Activated B cell treated with CpG ODN at 0.5 μM for 24 hours (primary cell): ENCODE measurements at regions of chr18 and their contacts with region 1.

Region 1: DNA sequence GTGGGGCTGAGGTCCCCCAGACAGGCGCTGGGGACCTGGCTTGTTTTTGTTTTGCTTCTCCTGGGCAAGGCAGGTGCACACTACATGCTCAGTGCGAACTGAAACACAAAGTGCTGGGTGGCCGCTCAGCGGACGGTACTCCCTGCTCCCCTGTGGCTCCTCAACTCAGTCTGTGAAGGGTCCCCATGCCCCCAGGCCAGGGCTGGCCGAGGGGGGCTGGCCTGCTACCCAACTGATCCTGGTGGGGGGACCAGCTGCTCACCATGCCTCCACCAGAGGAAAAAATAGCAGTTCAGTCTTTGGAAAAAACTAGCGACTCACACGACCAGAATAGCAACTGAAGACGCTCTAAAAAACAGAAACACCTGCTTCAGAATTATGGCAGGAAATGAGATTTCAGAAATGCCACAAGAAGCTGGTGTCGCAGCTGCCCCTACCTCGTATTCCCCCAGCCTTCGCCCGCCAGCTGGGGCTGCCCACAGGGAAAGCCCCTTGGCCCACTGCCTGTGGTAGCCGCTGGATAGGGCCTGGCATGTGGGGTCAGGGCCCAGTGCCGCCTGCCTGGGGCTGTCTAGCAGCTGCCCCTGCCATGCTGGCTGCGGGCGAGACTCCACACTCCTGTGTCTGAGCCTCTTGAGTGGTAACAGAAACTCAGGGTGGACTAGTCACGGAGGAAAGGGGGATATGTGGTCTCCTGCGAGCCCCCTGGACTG is 43.7 kb downstream of the MEX3C start:
- DNase-seq: peak; percentile 66
- ATAC-seq: peak; percentile 76
- H3K4me3 Mint-ChIP-seq: peak overlapping the region; percentile 86
- H3K27ac Mint-ChIP-seq: peak overlapping the region; percentile 99
- H3K4me1 Mint-ChIP-seq: peaks cover 54% of the 10 kb centered on the region
- H3K27me3 Mint-ChIP-seq: no peaks in the 10 kb centered on the region
- CTCF ChIP-seq: no peak

Region 2: DNA sequence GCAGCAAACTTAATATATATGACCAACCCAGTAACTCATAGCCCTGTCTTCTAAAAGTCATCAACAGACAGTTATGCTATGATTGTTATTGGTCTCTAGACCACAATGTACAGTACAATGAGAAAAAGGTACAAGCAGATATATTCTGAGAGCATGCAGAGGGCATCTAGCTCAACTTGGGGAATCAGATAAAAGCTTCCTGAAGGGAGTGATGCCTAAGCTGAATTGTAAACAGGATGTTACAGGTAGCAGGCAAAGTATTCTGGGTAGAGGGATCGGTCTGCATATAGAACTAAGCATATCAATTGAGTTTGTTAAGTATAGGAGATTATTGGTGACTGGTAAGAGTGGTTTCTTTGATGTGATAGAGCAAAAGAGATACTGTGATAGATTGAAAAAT is 244.6 kb before region 1 on chr18:
- CTCF ChIA-PET with region 1: no interaction called
- POLR2A ChIA-PET with region 1: no interaction called
- intact Hi-C with region 1: no loop called
- DNase-seq: no peak
- ATAC-seq: no peak
- H3K4me3 Mint-ChIP-seq: no peak overlapping the region
- H3K27ac Mint-ChIP-seq: no peak overlapping the region
- H3K4me1 Mint-ChIP-seq: no peaks in the 10 kb centered on the region
- H3K27me3 Mint-ChIP-seq: no peaks in the 10 kb centered on the region
- CTCF ChIP-seq: no peak

Region 3: GRCh38 chr18:51077217-51077616 is 76.6 kb before region 1 on chr18:
- CTCF ChIA-PET with region 1: no interaction called
- POLR2A ChIA-PET with region 1: interaction called, 5 read pairs
- intact Hi-C with region 1: loop called (anchors 2 kb)
- DNase-seq: no peak
- ATAC-seq: peak; percentile 33
- H3K4me3 Mint-ChIP-seq: no peak overlapping the region
- H3K27ac Mint-ChIP-seq: no peak overlapping the region
- H3K4me1 Mint-ChIP-seq: peaks cover 34% of the 10 kb centered on the region
- H3K27me3 Mint-ChIP-seq: no peaks in the 10 kb centered on the region
- CTCF ChIP-seq: no peak

Region 4: DNA sequence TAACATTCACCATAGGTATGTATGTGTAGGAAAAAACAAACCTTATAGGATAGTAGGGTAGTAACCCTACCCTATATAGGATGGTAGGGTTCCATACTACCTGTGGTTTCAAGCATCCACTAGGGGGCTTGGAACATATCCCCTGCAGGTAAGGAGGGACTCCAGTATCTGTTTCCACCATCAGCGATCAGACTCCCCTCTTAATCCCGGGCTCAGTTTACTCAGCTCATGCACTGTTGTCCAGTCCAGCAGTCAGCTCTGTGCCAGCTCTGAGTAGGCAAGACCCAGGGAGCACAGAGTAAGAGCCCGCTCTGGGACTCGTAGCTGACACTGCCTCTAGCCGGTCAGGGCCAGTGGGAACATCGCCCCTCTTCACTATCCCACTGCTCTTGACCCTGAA is 18.0 kb before region 1 on chr18:
- CTCF ChIA-PET with region 1: interaction called, 5 read pairs
- POLR2A ChIA-PET with region 1: no interaction called
- intact Hi-C with region 1: loop called (anchors 1 kb)
- DNase-seq: no peak
- ATAC-seq: no peak
- H3K4me3 Mint-ChIP-seq: no peak overlapping the region
- H3K27ac Mint-ChIP-seq: no peak overlapping the region
- H3K4me1 Mint-ChIP-seq: peaks cover 11% of the 10 kb centered on the region
- H3K27me3 Mint-ChIP-seq: no peaks in the 10 kb centered on the region
- CTCF ChIP-seq: no peak

Region 5: DNA sequence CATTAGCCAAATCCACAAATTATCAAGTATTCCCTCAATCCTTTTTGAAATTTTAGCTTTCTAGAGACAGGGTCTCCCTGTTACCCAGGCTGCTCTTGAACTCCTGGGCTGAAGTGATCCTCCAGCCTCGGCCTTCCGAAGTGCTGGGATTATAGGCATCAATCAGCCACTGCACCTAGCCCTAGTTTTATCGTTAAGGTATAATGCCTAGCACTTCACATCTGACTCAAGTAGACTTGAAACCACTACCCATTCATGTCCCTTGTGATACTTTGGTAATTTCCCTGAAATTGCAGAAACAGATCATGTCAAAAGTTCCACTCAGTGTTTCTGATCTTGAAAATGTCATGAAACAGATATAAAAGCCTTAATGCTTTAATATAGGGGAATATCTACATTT is 17.4 kb after region 1 on chr18:
- CTCF ChIA-PET with region 1: interaction called, 4 read pairs
- POLR2A ChIA-PET with region 1: interaction called, 7 read pairs
- intact Hi-C with region 1: loop called (anchors 1 kb)
- DNase-seq: no peak
- ATAC-seq: peak; percentile 28
- H3K4me3 Mint-ChIP-seq: no peak overlapping the region
- H3K27ac Mint-ChIP-seq: peak overlapping the region; percentile 68
- H3K4me1 Mint-ChIP-seq: peaks cover 43% of the 10 kb centered on the region
- H3K27me3 Mint-ChIP-seq: no peaks in the 10 kb centered on the region
- CTCF ChIP-seq: no peak